Caco-2 (cell line): ENCODE measurements at regions of chr9 and their contacts with region 1.

Region 1: DNA sequence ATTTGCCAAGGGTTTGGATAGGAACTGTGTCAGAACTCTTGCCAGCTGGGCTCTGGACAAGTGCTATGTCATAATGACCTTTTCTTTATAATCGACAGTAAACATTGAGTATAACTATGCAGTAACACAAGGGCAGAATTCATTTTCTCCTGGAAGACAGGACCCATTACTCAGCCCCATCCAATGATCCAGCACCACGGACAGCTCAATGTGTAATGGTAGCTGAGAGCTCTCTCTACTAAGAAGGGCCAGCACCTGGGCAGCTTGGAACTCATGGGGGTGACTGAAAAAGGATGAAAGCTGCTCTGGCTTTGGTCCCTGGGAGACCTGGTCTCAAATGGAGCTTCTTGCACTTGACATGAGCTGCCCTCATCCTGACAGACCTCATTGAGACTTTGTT is 347.8 kb downstream of the TRIM32 start:
- DNase-seq: peak; percentile 34 to 40
- H3K4me3 ChIP-seq: no peak overlapping the region
- H3K4me3 Mint-ChIP-seq: no peak overlapping the region
- H3K27ac Mint-ChIP-seq: no peak overlapping the region
- H3K4me1 ChIP-seq: no peaks in the 10 kb centered on the region
- H3K4me1 Mint-ChIP-seq: no peaks in the 10 kb centered on the region
- H3K27me3 ChIP-seq: no peaks in the 10 kb centered on the region
- H3K27me3 Mint-ChIP-seq: peaks cover 3% of the 10 kb centered on the region
- CTCF ChIP-seq: no peak

Region 2: DNA sequence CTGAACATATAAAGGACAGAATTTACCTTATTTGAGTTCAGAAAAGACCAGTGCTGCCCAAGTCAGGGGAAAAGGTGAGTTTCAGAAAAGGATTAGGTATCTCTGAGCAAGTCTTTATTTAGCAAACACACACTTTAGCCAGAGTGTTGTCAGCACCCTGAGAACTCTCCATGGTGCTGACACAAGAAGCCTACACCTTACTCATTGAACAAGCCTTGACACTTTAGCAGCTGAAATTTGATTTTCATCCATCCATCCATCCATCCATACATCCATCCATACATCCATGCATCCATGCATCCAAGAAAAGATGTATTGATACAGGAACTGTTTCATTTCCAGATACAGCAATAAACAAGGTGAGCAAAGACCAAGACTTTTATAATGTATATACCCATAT is 36.6 kb before region 1 on chr9:
- CTCF ChIA-PET with region 1: no interaction called
- POLR2A ChIA-PET with region 1: no interaction called
- intact Hi-C with region 1: loop called (anchors 2 kb)
- DNase-seq: peak in 1 of 2 experiments; percentile 19
- H3K4me3 ChIP-seq: no peak overlapping the region
- H3K4me3 Mint-ChIP-seq: no peak overlapping the region
- H3K27ac Mint-ChIP-seq: no peak overlapping the region
- H3K4me1 ChIP-seq: no peaks in the 10 kb centered on the region
- H3K4me1 Mint-ChIP-seq: no peaks in the 10 kb centered on the region
- H3K27me3 ChIP-seq: no peaks in the 10 kb centered on the region
- H3K27me3 Mint-ChIP-seq: peaks cover 7% of the 10 kb centered on the region
- CTCF ChIP-seq: no peak